ENCODE measurements at regions of chr7 and their contacts with region 1.

Region 1: GRCh38 chr7:47818796-47819606 is 129.3 kb downstream of the PKD1L1 start:
- DNase-seq: peak in 1 of 2 donors; percentile 47
- ATAC-seq: peak; percentile 63 to 83
- H3K4me3 ChIP-seq: no peak overlapping the region
- H3K27ac ChIP-seq: no peak overlapping the region
- H3K4me1 ChIP-seq: no peaks in the 10 kb centered on the region
- H3K27me3 ChIP-seq: no peaks in the 10 kb centered on the region
- CTCF ChIP-seq: peak; percentile 73 to 92 (median 87)
- POLR2A ChIP-seq: no peak

Region 2: DNA sequence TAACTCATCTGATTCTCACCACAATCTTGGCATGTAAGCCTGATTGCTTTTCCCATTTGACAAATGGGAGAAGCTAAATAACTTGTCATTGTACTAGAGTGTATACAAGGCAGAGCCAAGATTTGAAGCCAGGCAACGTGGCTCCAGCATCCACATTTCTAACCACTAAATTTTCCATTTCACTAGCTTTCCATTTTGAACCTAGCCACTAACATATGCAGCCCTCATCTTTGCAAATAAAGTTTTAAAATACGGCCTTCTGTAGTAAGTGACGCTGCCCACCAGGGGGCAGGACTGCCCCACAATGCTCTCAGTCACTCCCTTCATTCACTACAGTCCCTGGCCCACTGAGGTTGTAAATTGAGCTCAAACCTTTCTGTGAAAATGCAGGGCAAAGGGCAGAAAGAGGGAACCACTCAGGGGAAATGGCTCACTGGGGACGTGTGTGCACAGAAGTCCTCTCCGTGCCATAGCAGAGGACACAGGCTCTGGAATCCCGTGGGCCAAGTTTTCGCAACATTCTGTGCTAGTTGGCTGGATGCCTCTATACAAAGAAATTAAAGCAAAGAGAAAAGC is 552.8 kb before region 1 on chr7:
- in situ Hi-C with region 1: loop called (anchors 5 to 10 kb)
- intact Hi-C with region 1: loop called (anchors 1 kb)
- DNase-seq: peak; percentile 29 to 55
- ATAC-seq: peak; percentile 82 to 89
- H3K4me3 ChIP-seq: no peak overlapping the region
- H3K27ac ChIP-seq: peak overlapping the region in 3 of 4 donors; percentile 32 to 66 (median 55)
- H3K4me1 ChIP-seq: peaks cover 4 to 12% of the 10 kb centered on the region in 2 donors
- H3K27me3 ChIP-seq: no peaks in the 10 kb centered on the region
- CTCF ChIP-seq: peak; percentile 90 to 96 (median 93)
- POLR2A ChIP-seq: no peak

Region 3: DNA sequence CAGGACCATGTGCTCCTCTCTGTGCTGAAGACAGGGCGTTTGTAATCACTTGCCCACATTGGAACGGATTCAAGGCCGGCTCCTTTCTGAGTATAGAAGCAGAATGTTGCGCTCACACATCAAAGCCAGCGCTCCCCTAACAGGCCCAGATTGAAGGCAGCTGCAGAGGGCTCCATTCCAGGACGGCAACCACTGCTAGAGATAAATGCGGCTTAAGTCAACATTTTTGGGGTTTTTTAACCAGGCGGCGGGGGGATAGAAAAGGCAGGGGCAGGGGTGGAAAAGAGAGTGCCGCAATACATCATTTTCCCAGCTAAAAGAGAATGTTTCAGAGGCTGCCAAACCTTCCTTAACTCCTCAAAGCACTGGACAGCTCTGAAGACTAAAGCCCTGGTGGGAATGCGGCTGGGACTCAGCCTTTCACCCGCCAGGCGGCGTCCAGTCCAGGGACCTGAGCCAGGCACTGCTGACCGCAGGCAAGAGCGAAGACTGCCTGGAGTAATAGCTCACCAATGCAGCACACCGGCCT is 426.7 kb before region 1 on chr7:
- in situ Hi-C with region 1: no loop called
- intact Hi-C with region 1: loop called (anchors 5 kb)
- DNase-seq: peak; percentile 32 to 51
- ATAC-seq: peak; percentile 51 to 72
- H3K4me3 ChIP-seq: no peak overlapping the region
- H3K27ac ChIP-seq: no peak overlapping the region
- H3K4me1 ChIP-seq: peaks cover 5 to 7% of the 10 kb centered on the region in 2 donors
- H3K27me3 ChIP-seq: no peaks in the 10 kb centered on the region
- CTCF ChIP-seq: peak in 4 of 5 experiments; percentile 28 to 51 (median 42)
- POLR2A ChIP-seq: no peak

Region 4: DNA sequence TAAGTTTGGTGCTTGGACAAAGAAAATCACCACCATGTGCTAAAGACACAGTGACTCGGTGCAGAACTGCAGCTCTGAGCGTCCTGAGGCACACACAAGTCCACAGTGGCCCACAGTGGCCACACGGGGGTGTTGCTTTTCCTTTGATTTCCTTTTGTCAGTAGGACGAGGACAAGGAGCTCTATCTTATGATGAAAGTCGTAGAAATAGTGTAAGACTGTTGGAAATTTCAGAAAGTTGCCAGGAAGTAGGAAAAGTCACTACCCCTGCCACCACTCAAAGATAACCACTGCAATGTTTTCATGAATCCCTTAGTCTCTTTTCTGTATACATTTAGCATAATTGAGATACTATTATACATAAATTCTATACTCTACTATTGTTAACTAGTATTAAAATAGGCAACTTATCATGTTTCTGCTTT is 383.1 kb before region 1 on chr7:
- in situ Hi-C with region 1: loop called (anchors 10 kb)
- intact Hi-C with region 1: no loop called
- DNase-seq: peak; percentile 41 to 66
- ATAC-seq: peak; percentile 67 to 91
- H3K4me3 ChIP-seq: no peak overlapping the region
- H3K27ac ChIP-seq: no peak overlapping the region
- H3K4me1 ChIP-seq: no peaks in the 10 kb centered on the region
- H3K27me3 ChIP-seq: no peaks in the 10 kb centered on the region
- CTCF ChIP-seq: peak; percentile 63 to 79 (median 70)
- POLR2A ChIP-seq: no peak

Region 5: DNA sequence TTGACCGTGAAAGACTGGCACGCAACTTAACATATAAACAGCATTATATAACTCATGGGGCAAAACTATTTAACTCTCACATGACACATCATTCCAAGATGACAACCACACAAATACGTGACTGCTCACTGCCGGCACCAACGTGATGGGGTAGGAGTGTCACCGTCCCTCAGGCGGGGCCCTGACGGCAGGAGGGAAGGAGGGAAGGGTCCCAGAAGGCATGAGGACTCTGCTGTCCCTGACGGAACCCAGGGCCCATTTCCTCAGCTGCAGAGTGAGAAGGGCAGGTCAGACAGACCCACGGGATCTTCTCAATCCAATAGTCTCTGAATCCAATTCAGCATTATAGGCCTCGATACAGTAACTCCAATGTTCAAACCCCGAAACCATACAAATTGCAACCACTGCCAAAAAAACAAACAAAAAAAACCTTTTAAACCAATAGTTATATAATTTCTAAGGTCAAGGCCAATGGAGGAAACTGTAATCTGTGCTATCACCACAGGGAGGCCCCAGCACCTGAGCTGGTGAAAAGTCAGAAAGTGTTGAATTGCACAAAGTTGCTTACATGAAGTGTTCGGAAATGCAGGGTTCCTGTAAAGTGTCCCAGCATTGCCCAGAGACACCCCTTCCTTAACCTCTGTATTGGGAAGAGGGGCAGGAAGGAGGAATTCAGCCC is 374.5 kb before region 1 on chr7:
- in situ Hi-C with region 1: loop called (anchors 10 kb)
- intact Hi-C with region 1: loop called (anchors 2 kb)
- DNase-seq: no peak
- ATAC-seq: peak in 1 of 2 donors; percentile 29
- H3K4me3 ChIP-seq: no peak overlapping the region
- H3K27ac ChIP-seq: peak overlapping the region; percentile 91 to 98 (median 94)
- H3K4me1 ChIP-seq: peaks cover 70 to 73% of the 10 kb centered on the region in 2 donors
- H3K27me3 ChIP-seq: no peaks in the 10 kb centered on the region
- CTCF ChIP-seq: peak; percentile 46 to 66 (median 59)
- POLR2A ChIP-seq: no peak

Region 6: DNA sequence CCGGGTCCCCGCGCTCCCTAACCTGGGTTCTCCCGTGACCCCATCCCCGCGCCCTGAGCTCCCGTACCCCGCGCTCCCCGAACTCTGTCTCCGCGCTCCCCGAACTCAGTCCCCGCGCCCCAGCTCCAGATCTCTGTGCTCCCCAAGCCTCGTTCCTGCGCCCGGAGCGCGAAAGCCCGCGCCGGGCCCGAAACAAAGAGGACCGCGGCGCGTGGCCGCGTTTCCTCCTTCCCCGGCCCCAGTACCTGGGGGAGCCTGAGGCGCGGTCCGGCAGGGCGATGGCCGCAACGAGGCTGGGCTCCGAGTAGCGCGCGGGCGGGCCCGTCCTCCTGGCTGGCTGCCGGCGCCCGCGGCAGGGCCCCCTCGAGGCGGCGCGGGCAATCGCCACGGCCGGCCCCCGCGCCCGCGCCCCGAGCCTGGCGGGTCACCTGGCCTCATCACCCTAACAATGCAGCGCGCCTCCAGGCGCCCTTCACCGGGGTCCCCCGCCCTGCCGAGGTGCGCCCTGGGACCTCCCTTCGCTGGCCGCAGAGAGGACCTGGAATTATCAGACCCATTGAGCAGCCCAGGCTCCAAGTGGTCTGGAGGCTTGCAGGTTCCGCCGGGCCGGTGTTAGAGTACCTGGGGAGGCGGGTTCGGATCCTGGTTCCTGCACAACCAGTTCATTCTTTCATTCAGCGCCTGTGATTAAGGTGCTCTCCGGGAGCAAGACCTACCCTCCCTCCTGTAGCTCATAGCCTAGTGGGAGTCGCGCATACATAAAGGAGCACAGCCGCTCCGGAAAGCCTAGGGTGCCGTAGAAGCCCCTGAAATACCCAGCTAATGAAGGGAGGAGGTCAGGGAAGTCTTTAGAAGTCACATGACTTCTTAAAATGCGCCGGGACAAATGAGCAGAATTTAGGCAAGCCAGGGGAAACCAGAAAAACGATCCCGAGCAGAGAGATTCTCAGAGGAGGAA is 236.9 kb before region 1 on chr7 and contains the start of gene TNS3:
- in situ Hi-C with region 1: loop called in 2 of 4 experiments (anchors 25 kb)
- intact Hi-C with region 1: loop called (anchors 10 kb)
- DNase-seq: no peak
- ATAC-seq: peak; percentile 37 to 50
- H3K4me3 ChIP-seq: peak within 1 kb of the TSS; percentile 70 to 84 (median 74)
- H3K27ac ChIP-seq: peak within 1 kb of the TSS; percentile 62 to 76 (median 70)
- H3K4me1 ChIP-seq: peaks cover 21 to 27% of the 10 kb centered on the region in 2 donors
- H3K27me3 ChIP-seq: peaks cover 0 to 3% (median 0%) of the 10 kb centered on the region in 3 donors
- CTCF ChIP-seq: peak in 4 of 5 experiments; percentile 6 to 41 (median 25)
- POLR2A ChIP-seq: peak in 1 of 2 donors; percentile 20
- total RNA-seq, gene TNS3: 39.4 to 64.3 (median 50.5) TPM

Region 7: GRCh38 chr7:47714669-47715607 is 104.1 kb before region 1 on chr7:
- in situ Hi-C with region 1: no loop called
- intact Hi-C with region 1: no loop called
- DNase-seq: no peak
- ATAC-seq: no peak
- H3K4me3 ChIP-seq: no peak overlapping the region
- H3K27ac ChIP-seq: no peak overlapping the region
- H3K4me1 ChIP-seq: no peaks in the 10 kb centered on the region
- H3K27me3 ChIP-seq: no peaks in the 10 kb centered on the region
- CTCF ChIP-seq: no peak
- POLR2A ChIP-seq: no peak

Region 8: DNA sequence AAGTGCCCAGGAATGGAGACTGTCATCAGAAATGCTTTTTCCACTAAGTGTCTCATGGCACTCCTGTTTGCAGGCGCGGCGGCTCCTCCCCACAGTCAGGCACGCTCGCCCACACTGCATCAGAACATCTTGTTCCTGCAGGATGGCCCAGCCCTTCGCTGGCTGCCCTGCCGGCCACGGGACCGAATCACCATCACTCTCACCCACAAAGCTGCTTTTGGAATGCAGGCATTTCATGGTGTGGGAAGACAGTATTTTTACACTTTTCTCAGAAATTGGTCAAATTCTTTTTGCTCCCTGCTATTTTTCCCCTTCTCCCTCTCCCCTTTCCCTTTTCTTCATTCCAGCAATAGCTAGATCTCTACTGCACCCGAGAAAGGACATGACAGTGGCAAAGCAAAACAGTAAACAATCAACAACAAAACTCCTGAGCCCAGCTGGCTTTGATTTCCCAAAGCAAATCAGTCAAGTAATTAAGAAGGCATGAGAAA is 61.0 kb before region 1 on chr7:
- in situ Hi-C with region 1: no loop called
- intact Hi-C with region 1: loop called (anchors 5 kb)
- DNase-seq: peak; percentile 77 to 80
- ATAC-seq: peak; percentile 74 to 87
- H3K4me3 ChIP-seq: no peak overlapping the region
- H3K27ac ChIP-seq: peak overlapping the region; percentile 58 to 74 (median 72)
- H3K4me1 ChIP-seq: peaks cover 16% of the 10 kb centered on the region in 2 donors
- H3K27me3 ChIP-seq: no peaks in the 10 kb centered on the region
- CTCF ChIP-seq: no peak
- POLR2A ChIP-seq: no peak

Region 9: DNA sequence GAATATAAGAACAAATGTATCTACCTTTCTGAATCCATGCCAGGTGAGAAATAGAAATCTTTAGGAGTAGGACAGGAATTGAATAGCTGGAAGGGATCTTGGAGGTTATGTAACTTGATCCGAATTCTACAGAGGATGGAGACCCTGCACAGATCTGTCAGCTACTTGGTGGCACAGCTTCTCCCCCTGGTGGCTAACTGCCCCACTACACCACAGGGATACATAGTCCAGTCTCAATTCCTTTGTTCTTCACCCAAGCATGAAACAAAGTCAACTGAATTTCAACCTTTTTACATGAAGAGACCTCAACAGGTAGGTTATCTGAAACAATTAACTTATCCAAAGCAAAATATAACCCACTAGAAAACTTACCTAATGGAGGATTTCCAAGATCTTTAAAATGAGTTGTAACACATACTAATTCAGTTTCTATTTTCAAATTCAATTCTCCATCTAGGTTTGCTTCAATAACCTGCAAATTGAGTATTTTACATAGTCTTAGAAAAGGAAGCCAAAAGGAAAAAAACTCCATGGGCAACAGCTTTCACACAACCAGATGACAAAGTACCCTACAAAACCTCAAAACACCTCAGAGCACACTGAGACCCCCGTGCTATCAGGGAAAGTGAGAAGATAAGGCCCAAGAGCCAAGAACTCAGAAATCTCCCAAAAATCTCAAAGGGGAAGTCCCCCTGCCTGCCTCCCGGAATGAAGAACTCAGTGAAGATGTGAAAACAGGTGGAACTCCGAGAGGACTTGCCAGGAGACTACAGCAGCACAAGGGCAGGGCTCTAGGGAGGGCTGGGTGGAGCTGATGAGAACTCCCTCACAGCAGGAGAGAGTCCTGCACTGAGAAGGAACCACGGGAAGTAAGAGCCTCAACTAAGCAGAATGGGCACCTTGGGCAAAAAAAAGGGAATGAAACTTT is 150.1 kb after region 1 on chr7:
- in situ Hi-C with region 1: no loop called
- intact Hi-C with region 1: no loop called
- DNase-seq: no peak
- ATAC-seq: no peak
- H3K4me3 ChIP-seq: no peak overlapping the region
- H3K27ac ChIP-seq: peak overlapping the region in 3 of 4 donors; percentile 1 to 34 (median 15)
- H3K4me1 ChIP-seq: peaks cover 0 to 4% of the 10 kb centered on the region in 2 donors
- H3K27me3 ChIP-seq: no peaks in the 10 kb centered on the region
- CTCF ChIP-seq: peak; percentile 48 to 67 (median 56)
- POLR2A ChIP-seq: no peak

Region 10: GRCh38 chr7:48563334-48563733 is 744.3 kb after region 1 on chr7:
- in situ Hi-C with region 1: no loop called
- intact Hi-C with region 1: no loop called
- DNase-seq: no peak
- ATAC-seq: no peak
- H3K4me3 ChIP-seq: no peak overlapping the region
- H3K27ac ChIP-seq: no peak overlapping the region
- H3K4me1 ChIP-seq: no peaks in the 10 kb centered on the region
- H3K27me3 ChIP-seq: no peaks in the 10 kb centered on the region
- CTCF ChIP-seq: no peak
- POLR2A ChIP-seq: no peak

Measured in gastrocnemius medialis (tissue), 4 donors.